Activated B cell treated with CpG ODN at 0.5 μM for 24 hours (primary cell): ENCODE measurements at regions of chr2 and their contacts with region 1.

Region 1: DNA sequence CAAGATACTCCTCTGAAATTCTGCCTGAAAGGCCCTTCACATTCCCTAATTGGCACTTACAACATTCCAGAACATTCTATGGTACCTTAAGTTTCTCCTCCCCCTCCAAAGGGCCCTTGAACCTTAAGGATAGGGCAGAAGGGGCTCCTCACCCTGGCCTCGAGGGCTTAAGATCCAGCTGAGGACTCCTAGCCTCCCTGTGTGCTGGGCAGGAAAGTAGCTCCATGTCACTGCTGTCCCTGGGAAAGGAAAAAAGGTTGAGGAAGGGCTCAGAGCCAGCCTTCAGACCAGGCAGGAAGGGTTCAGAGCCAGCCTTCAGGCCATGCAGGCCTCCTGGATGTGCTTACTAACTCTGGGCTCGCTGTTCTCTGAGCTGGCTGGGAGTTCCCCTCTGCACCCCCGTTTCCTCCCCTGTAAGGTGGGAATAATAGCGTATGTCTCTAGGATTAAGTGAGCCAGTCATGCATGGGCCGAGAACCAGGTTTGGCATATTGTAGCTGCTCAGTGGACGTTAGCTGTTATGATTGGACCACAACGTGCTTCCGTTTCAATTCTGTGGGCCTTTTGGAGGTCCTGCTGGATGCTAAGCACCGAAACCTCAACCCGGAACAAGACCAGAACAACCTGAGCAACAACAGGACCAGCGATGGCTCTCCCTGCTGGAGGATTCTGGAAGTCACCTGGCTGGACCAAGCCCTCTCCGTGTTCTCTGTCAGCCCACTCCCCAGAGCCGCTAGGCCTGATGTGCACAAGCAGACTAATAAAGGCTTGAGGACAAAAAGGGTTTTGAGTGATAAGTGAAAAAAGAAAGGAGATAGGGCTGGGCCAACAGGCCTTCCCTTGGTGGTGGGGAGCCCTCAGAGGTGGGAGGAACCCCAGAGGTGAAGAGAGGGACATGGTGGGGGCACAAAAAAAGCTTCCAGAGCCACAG is 1.0 kb upstream of the B3GNT7 start:
- DNase-seq: peak; percentile 55
- ATAC-seq: peak; percentile 56
- H3K4me3 Mint-ChIP-seq: peak overlapping the region; percentile 97
- H3K27ac Mint-ChIP-seq: peak overlapping the region; percentile 100
- H3K4me1 Mint-ChIP-seq: peaks cover 67% of the 10 kb centered on the region
- H3K27me3 Mint-ChIP-seq: no peaks in the 10 kb centered on the region
- CTCF ChIP-seq: no peak

Region 2: GRCh38 chr2:230202430-230203109 is 1191.9 kb before region 1 on chr2:
- CTCF ChIA-PET with region 1: no interaction called
- POLR2A ChIA-PET with region 1: no interaction called
- intact Hi-C with region 1: loop called (anchors 5 kb)
- DNase-seq: peak; percentile 39
- ATAC-seq: peak; percentile 70
- H3K4me3 Mint-ChIP-seq: peak overlapping the region; percentile 76
- H3K27ac Mint-ChIP-seq: peak overlapping the region; percentile 87
- H3K4me1 Mint-ChIP-seq: peaks cover 42% of the 10 kb centered on the region
- H3K27me3 Mint-ChIP-seq: no peaks in the 10 kb centered on the region
- CTCF ChIP-seq: no peak

Region 3: GRCh38 chr2:230411570-230412370 is 982.7 kb before region 1 on chr2:
- CTCF ChIA-PET with region 1: no interaction called
- POLR2A ChIA-PET with region 1: no interaction called
- intact Hi-C with region 1: no loop called
- DNase-seq: peak; percentile 61
- ATAC-seq: peak; percentile 67
- H3K4me3 Mint-ChIP-seq: peak overlapping the region; percentile 99
- H3K27ac Mint-ChIP-seq: peak overlapping the region; percentile 99
- H3K4me1 Mint-ChIP-seq: peaks cover 74% of the 10 kb centered on the region
- H3K27me3 Mint-ChIP-seq: no peaks in the 10 kb centered on the region
- CTCF ChIP-seq: no peak

Region 4: GRCh38 chr2:231204581-231204980 is 189.9 kb before region 1 on chr2:
- CTCF ChIA-PET with region 1: no interaction called
- POLR2A ChIA-PET with region 1: interaction called, 11 read pairs
- intact Hi-C with region 1: no loop called
- DNase-seq: no peak
- ATAC-seq: no peak
- H3K4me3 Mint-ChIP-seq: no peak overlapping the region
- H3K27ac Mint-ChIP-seq: no peak overlapping the region
- H3K4me1 Mint-ChIP-seq: no peaks in the 10 kb centered on the region
- H3K27me3 Mint-ChIP-seq: no peaks in the 10 kb centered on the region
- CTCF ChIP-seq: no peak

Region 5: GRCh38 chr2:231260442-231261208 is 133.9 kb before region 1 on chr2:
- CTCF ChIA-PET with region 1: no interaction called
- POLR2A ChIA-PET with region 1: no interaction called
- intact Hi-C with region 1: no loop called
- DNase-seq: no peak
- ATAC-seq: no peak
- H3K4me3 Mint-ChIP-seq: no peak overlapping the region
- H3K27ac Mint-ChIP-seq: no peak overlapping the region
- H3K4me1 Mint-ChIP-seq: no peaks in the 10 kb centered on the region
- H3K27me3 Mint-ChIP-seq: no peaks in the 10 kb centered on the region
- CTCF ChIP-seq: no peak

Region 6: GRCh38 chr2:231308631-231309428 is 85.6 kb before region 1 on chr2:
- CTCF ChIA-PET with region 1: no interaction called
- POLR2A ChIA-PET with region 1: interaction called, 5 read pairs
- intact Hi-C with region 1: loop called (anchors 5 kb)
- DNase-seq: no peak
- ATAC-seq: no peak
- H3K4me3 Mint-ChIP-seq: no peak overlapping the region
- H3K27ac Mint-ChIP-seq: no peak overlapping the region
- H3K4me1 Mint-ChIP-seq: peaks cover 32% of the 10 kb centered on the region
- H3K27me3 Mint-ChIP-seq: no peaks in the 10 kb centered on the region
- CTCF ChIP-seq: no peak

Region 7: GRCh38 chr2:231411831-231412617 is 17.5 kb after region 1 on chr2:
- CTCF ChIA-PET with region 1: interaction called, 24 read pairs
- POLR2A ChIA-PET with region 1: interaction called, 9 read pairs
- intact Hi-C with region 1: loop called (anchors 2 kb)
- DNase-seq: peak; percentile 86
- ATAC-seq: peak; percentile 100
- H3K4me3 Mint-ChIP-seq: peak overlapping the region; percentile 56
- H3K27ac Mint-ChIP-seq: no peak overlapping the region
- H3K4me1 Mint-ChIP-seq: peaks cover 9% of the 10 kb centered on the region
- H3K27me3 Mint-ChIP-seq: peaks cover 13% of the 10 kb centered on the region
- CTCF ChIP-seq: no peak

Region 8: DNA sequence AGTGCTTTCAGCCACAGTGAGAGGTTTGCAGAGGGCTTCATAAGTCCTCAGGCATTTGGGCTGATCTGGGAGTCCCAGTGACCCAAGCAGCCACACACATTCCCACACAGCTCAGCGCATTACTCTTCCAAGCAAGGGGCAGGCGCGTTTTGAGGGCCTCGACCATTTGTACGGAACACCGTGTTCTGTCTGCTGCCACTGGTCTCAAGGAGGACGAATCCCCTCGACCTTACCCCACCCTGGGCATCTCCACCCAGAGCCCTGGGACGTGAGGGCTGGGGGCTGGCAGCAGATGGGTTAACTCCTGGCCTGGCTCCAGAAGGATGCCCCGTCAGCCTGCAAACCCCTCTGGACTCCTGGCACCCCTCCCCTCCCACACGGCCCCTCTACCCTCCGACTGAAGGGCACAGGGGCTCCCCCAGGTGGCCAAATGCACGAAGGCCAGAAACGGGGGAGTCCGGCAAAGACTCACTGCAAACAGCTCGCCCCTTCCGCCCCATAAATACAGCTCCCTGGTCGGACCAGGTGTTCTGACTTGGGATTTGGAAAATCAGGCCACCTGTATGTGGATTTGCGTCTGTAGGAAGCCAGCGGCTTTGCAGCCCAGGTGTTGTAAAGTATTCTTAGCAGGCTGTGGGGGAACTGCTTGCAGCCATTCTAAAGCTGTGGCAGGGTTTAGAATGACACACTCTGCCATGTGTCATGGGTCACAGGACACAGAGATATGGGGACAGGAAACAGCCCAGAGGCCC is 280.3 kb after region 1 on chr2:
- CTCF ChIA-PET with region 1: no interaction called
- POLR2A ChIA-PET with region 1: interaction called, 16 read pairs
- intact Hi-C with region 1: no loop called
- DNase-seq: peak; percentile 81
- ATAC-seq: peak; percentile 40
- H3K4me3 Mint-ChIP-seq: peak overlapping the region; percentile 64
- H3K27ac Mint-ChIP-seq: peak overlapping the region; percentile 98
- H3K4me1 Mint-ChIP-seq: peaks cover 77% of the 10 kb centered on the region
- H3K27me3 Mint-ChIP-seq: no peaks in the 10 kb centered on the region
- CTCF ChIP-seq: peak; percentile 83